Sigmoid colon (tissue), 7 donors: ENCODE measurements at regions of chr11 and their contacts with region 1.

Region 1: DNA sequence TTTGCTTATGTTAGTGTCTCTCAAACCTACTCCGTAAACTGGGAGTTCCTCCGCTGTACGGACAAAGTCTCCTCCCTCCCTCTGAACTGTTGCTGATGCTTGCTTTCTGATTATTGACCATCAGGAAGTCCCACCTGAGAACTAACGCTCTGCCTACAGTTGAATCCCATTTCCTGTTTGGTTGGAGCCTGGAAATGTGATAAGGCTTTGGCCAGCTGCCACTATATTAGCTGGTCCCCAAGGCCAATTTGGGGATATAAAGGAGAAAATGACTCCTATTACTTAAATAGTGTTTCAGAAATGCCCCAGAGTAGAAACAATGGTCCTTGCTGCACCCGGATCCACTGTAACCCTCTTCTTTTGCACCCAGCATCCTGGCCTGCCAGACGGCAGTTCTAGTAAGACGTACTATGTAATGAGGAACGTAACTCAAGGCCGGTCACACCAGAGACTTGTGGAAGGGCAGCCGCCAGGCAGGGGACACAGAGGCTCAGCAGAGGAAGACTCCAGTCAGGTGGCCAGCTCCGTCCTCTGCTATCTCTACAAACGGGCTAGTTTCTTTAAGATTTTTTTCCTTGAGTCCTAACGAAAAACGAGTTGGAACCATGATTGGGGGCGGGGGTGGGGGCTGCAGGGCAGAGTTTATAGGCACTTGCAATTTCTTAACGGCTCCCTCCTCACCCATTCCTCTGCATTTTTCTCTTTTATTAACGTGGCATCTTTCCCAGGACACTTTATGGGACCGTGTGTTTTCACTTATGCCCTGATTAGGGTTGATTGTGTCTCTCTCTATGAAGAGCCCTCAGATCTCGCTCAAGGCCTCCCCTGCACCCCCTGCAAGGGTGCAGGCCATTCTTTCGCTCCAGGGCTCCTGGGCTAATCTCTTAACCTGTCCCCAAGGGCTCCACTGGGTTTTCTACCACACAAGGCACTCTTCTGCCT is 72.8 kb upstream of the CDON start:
- DNase-seq: peak; percentile 70
- H3K4me3 ChIP-seq: no peak overlapping the region
- H3K27ac ChIP-seq: peak overlapping the region; percentile 48 to 91 (median 88)
- H3K4me1 ChIP-seq: peaks cover 0 to 88% (median 79%) of the 10 kb centered on the region in 4 donors
- H3K27me3 ChIP-seq: no peaks in the 10 kb centered on the region
- CTCF ChIP-seq: no peak
- EP300 ChIP-seq: no peak
- POLR2A ChIP-seq: no peak

Region 2: GRCh38 chr11:126115816-126116331 is 19.6 kb before region 1 on chr11:
- intact Hi-C with region 1: loop called (anchors 2 kb)
- DNase-seq: peak; percentile 92
- H3K4me3 ChIP-seq: no peak overlapping the region
- H3K27ac ChIP-seq: peak overlapping the region; percentile 85 to 91 (median 89)
- H3K4me1 ChIP-seq: peaks cover 0 to 63% (median 60%) of the 10 kb centered on the region in 4 donors
- H3K27me3 ChIP-seq: no peaks in the 10 kb centered on the region
- CTCF ChIP-seq: peak in 3 of 4 experiments; percentile 8 to 33 (median 28)
- EP300 ChIP-seq: peak in 2 of 4 donors; percentile 74 to 77
- POLR2A ChIP-seq: no peak